Right cardiac atrium (tissue), 5 donors: ENCODE measurements at regions of chr3 and their contacts with region 1.

Region 1: GRCh38 chr3:141452036-141452435 is 34.8 kb upstream of the RASA2 start:
- DNase-seq: no peak
- ATAC-seq: peak; percentile 79 to 81
- H3K4me3 ChIP-seq: no peak overlapping the region
- H3K27ac ChIP-seq: no peak overlapping the region
- H3K4me1 ChIP-seq: peaks cover 3% of the 10 kb centered on the region
- H3K27me3 ChIP-seq: no peaks in the 10 kb centered on the region

Region 2: GRCh38 chr3:141311496-141312353 is 140.3 kb before region 1 on chr3:
- intact Hi-C with region 1: loop called in 3 of 4 experiments (anchors 5 kb)
- DNase-seq: peak; percentile 99
- ATAC-seq: peak; percentile 98
- H3K4me3 ChIP-seq: peak overlapping the region; percentile 40
- H3K27ac ChIP-seq: peak overlapping the region; percentile 92
- H3K4me1 ChIP-seq: peaks cover 8% of the 10 kb centered on the region
- H3K27me3 ChIP-seq: no peaks in the 10 kb centered on the region

Region 3: GRCh38 chr3:141360888-141361598 is 91.0 kb before region 1 on chr3:
- intact Hi-C with region 1: loop called (anchors 2 to 5 kb)
- DNase-seq: no peak
- ATAC-seq: peak; percentile 78 to 92
- H3K4me3 ChIP-seq: peak overlapping the region; percentile 35
- H3K27ac ChIP-seq: no peak overlapping the region
- H3K4me1 ChIP-seq: no peaks in the 10 kb centered on the region
- H3K27me3 ChIP-seq: no peaks in the 10 kb centered on the region

Region 4: DNA sequence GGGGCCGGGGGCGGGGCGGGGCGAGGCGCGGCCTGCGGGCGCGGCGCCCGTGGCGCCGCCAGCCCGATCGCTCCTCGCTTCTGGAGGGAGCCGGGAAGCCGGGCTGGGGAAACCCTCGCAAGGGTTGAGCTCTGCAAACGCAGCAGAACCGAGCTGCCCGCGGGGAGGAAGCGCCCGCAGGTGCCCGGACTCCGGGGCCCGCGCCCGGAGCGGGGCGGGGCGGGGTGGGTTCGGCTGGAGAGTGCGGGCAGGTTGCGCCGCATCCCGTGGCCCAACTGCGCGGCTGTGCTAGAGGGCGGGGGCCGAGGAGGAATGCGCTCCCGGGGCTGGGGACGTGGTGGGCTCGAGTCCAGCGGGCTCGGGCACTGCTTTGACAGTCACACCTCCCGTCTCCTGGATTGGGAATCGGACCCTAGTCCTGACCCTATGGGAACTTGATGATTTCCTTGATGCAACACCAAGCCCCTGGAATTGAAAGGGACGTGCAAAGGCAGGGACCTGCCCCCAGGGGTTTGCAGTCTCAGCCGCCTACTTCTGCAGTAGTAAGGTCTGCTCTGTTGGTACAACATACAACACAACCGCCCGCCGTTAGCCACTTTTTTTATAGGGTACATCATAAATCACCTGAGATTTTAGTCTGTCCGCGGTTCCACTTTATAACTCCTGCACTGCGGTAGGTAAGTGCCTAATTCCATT is 49.4 kb before region 1 on chr3:
- intact Hi-C with region 1: loop called in 1 of 4 experiments (anchors 5 kb)
- DNase-seq: peak; percentile 72 to 91 (median 91)
- ATAC-seq: peak; percentile 82 to 83
- H3K4me3 ChIP-seq: peak overlapping the region; percentile 87
- H3K27ac ChIP-seq: peak overlapping the region; percentile 96
- H3K4me1 ChIP-seq: peaks cover 11% of the 10 kb centered on the region
- H3K27me3 ChIP-seq: no peaks in the 10 kb centered on the region

Region 5: DNA sequence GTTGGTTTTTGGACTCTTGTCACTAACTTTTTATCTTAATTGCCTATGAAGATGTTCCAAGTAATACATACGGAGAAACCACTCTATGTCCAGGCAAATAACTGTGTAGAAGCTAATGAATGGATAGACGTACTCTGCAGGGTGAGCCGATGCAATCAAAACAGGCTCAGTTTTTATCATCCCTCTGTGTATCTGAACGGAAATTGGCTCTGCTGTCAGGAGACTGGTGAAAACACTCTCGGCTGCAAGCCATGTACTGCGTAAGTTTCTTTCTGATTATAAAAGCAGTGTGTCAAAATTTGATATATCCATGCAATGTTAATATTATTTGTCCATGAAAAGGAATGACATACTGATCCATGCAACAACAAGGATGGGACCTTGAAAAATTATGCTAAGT is 156.4 kb after region 1 on chr3:
- intact Hi-C with region 1: no loop called
- DNase-seq: no peak
- ATAC-seq: peak; percentile 56 to 71
- H3K4me3 ChIP-seq: no peak overlapping the region
- H3K27ac ChIP-seq: no peak overlapping the region
- H3K4me1 ChIP-seq: peaks cover 1% of the 10 kb centered on the region
- H3K27me3 ChIP-seq: no peaks in the 10 kb centered on the region